IMR-90 (cell line): ENCODE measurements at regions of chr9 and their contacts with region 1.

Region 1: GRCh38 chr9:85702726-85703289 is 38.9 kb downstream of the AGTPBP1 start:
- DNase-seq: no peak
- ATAC-seq: no peak
- H3K4me3 ChIP-seq: no peak overlapping the region
- H3K27ac ChIP-seq: no peak overlapping the region
- H3K4me1 ChIP-seq: no peaks in the 10 kb centered on the region
- H3K27me3 ChIP-seq: no peaks in the 10 kb centered on the region
- CTCF ChIP-seq: no peak
- POLR2A ChIP-seq: no peak
- RAD21 ChIP-seq: no peak

Region 2: DNA sequence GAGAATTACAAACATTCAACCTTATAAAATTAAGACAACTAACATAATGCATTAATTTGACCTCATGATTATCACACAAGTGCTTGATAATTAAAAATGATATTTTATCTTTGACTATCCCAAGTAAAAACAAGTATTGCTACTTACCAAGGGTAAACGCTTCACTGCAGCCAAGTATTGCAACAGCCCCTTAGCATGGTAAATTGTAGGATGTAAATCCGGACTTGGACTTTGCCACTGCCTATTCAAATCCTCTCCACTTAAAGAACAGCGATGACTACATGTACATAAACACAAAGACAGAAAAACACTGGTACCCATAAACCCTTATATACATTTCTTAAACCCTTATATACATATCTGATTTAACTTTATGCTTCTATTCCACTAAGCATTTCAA is 116.1 kb before region 1 on chr9:
- CTCF ChIA-PET with region 1: interaction called, 10 read pairs
- POLR2A ChIA-PET with region 1: no interaction called
- dilution Hi-C with region 1: no loop called
- in situ Hi-C with region 1: no loop called
- intact Hi-C with region 1: no loop called
- DNase-seq: no peak
- ATAC-seq: no peak
- H3K4me3 ChIP-seq: no peak overlapping the region
- H3K27ac ChIP-seq: no peak overlapping the region
- H3K4me1 ChIP-seq: no peaks in the 10 kb centered on the region
- H3K27me3 ChIP-seq: no peaks in the 10 kb centered on the region
- CTCF ChIP-seq: no peak
- POLR2A ChIP-seq: no peak
- RAD21 ChIP-seq: no peak